Activated T-helper 2 cell treated with anti-CD3 and anti-CD28 coated beads, Interferon-gamma antibody, Interleukin-2, Interleukin-4, amounts not matched to agents 10 μg/mL and 5 μg/mL and 100 μg/mL, durations not matched to agents 14 hours and 24 hours and 36 hours (primary cell): ENCODE measurements at regions of chr1 and their contacts with region 1.

Region 1: GRCh38 chr1:2290595-2291510 is 62.7 kb downstream of the SKI start:
- DNase-seq: peak; percentile 77
- H3K4me3 Mint-ChIP-seq: peak overlapping the region; percentile 80
- H3K27ac Mint-ChIP-seq: peak overlapping the region; percentile 93
- H3K4me1 Mint-ChIP-seq: peaks cover 64% of the 10 kb centered on the region
- H3K27me3 Mint-ChIP-seq: no peaks in the 10 kb centered on the region

Region 2: DNA sequence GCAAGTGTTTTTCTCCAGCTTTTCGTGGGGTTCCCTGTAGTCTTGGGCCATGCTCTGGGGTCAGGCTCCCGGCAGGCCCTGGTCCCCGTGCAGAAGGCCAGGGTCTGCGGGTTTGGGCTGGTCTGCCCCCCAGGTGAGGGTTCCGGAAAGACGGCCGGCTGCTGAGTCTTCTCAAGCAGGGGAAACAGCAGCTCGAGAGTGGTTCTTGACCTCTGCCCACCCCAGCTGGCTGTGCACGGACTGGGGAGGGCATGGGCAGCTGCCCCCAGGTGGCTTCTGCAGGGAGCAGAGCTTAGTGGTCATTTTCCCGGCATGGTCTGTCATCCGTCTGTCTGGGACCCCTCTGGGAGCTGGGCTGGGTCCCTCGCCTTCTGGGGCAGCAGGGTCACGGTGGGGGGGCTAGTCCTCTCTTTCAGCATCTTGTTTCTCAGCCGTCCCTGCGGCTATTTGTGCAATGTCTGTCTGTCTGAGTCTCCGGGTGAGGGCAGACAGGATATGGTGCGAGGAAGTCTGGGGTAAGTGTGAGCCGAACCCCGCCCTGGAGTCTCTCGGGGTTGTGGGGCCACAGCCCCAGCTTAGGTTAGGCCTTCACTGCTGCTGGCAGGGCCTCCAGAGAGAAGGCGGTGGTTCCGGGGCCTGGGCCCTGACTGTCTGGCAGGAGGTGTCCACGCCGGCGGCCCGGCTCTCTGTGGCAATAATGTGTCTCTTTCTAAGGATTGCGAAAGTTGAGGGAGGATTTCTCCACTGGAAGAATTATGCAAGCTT is 56.7 kb before region 1 on chr1:
- intact Hi-C with region 1: loop called (anchors 2 kb)
- DNase-seq: peak; percentile 66
- H3K4me3 Mint-ChIP-seq: peak overlapping the region; percentile 92
- H3K27ac Mint-ChIP-seq: peak overlapping the region; percentile 81
- H3K4me1 Mint-ChIP-seq: peaks cover 62% of the 10 kb centered on the region
- H3K27me3 Mint-ChIP-seq: no peaks in the 10 kb centered on the region

Region 3: GRCh38 chr1:2259668-2260402 is 31.0 kb before region 1 on chr1:
- intact Hi-C with region 1: loop called (anchors 2 kb)
- DNase-seq: no peak
- H3K4me3 Mint-ChIP-seq: no peak overlapping the region
- H3K27ac Mint-ChIP-seq: peak overlapping the region; percentile 68
- H3K4me1 Mint-ChIP-seq: peaks cover 34% of the 10 kb centered on the region
- H3K27me3 Mint-ChIP-seq: no peaks in the 10 kb centered on the region

Region 4: GRCh38 chr1:2381741-2382620 is 91.1 kb after region 1 on chr1:
- intact Hi-C with region 1: loop called (anchors 10 kb)
- DNase-seq: peak; percentile 67
- H3K4me3 Mint-ChIP-seq: no peak overlapping the region
- H3K27ac Mint-ChIP-seq: no peak overlapping the region
- H3K4me1 Mint-ChIP-seq: no peaks in the 10 kb centered on the region
- H3K27me3 Mint-ChIP-seq: no peaks in the 10 kb centered on the region

Region 5: GRCh38 chr1:2594001-2594640 is 303.3 kb after region 1 on chr1:
- intact Hi-C with region 1: no loop called
- DNase-seq: no peak
- H3K4me3 Mint-ChIP-seq: no peak overlapping the region
- H3K27ac Mint-ChIP-seq: no peak overlapping the region
- H3K4me1 Mint-ChIP-seq: peaks cover 2% of the 10 kb centered on the region
- H3K27me3 Mint-ChIP-seq: peaks cover 4% of the 10 kb centered on the region